GM12878 (cell line): ENCODE measurements at regions of chr12 and their contacts with region 1.

Region 1: DNA sequence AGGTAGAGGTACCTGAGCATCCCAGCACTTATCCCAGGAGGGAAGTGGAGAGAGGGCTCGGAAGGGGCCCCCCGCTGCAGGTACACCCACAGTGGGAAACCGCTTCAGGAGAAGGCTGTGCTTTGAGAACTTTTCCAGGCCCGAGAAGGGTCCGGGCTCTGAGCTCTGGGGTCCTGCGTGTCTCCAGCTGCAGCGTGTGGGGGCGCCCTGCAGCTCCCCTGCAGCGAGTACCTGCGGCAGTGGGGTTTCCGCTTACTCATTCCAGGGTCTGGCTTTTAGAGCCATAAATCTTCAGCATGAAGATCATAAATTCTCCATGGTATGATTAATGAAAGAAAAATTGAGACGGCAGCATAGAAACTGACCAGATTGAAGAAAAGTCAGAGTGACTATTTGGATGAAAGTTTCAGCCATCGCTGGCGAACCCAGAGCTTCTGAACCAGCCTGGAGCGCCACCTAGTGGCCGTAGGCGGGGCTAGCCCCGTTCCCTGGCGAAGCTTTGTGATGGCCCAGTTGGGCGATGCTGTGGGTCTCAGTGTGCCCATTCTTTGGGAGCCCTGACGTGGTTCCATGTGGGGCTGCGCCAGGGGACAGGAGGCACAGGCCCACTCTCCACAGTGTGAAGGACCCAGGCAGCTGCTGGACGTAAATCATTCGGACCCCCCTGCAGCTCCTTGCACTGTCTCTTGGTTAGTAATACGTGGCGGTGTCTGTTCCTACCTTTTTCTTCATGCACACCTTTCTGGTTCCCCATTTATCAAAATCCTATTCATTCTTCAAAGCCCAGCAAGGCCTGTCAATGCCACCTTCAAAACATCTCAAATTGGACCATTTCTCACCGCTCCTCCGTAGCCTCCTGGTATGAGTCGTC is 198.2 kb downstream of the TSPAN9 start:
- DNase-seq: no peak
- ATAC-seq: peak; percentile 96
- H3K4me3 ChIP-seq: no peak overlapping the region
- H3K27ac ChIP-seq: no peak overlapping the region
- H3K4me1 ChIP-seq: no peaks in the 10 kb centered on the region
- H3K27me3 ChIP-seq: no peaks in the 10 kb centered on the region; a peak in 2 of 4 replicates
- CTCF ChIP-seq: peak; percentile 83 to 96 (median 95)
- EP300 ChIP-seq: no peak
- POLR2A ChIP-seq: no peak
- RAD21 ChIP-seq: peak; percentile 85

Region 2: DNA sequence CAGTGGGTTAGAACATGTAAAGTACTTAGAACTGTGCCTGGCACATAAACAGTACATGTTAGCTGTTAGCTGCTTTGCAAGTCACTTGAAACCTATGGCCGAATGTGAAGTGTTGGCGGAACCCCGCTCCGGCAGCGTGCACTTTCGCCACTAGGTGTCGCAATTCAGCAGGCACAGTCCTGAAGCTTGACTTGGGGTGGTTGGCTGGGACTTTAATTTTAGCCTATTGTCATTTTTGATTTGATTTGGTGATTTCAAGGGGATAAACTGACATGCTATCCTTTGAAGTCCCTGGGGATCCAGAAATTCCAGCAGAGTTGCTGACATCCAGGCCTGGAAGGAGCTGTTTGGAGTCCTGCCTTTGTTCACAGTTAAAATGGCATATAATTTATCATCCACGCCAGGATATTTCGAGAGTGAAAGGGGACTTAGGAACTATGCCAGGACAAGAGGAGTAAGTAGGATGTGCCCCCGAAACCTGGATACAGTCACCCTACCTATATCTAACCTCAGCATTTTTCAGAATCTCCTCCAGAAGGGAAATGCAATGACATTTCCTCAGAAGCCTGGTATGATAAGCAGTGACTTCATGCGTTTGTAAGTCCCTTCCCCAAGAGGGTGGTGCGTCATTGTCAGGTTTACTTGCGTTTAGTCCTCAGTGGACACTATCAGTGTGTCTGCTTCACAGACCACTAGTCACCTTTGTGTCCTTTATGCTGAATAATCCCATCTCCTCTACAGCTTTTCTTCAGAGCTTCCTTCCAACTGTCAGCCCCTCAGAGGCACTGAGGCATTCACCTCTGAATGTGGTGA is 201.8 kb before region 1 on chr12:
- CTCF ChIA-PET with region 1: interaction called, 41 read pairs
- POLR2A ChIA-PET with region 1: no interaction called
- RAD21 ChIA-PET with region 1: interaction called, 9 read pairs
- SMC1A ChIA-PET with region 1: interaction called, 4 read pairs
- in situ Hi-C with region 1: loop called (anchors 5 kb)
- intact Hi-C with region 1: loop called (anchors 1 kb)
- DNase-seq: peak; percentile 37
- ATAC-seq: peak; percentile 87
- H3K4me3 ChIP-seq: no peak overlapping the region
- H3K27ac ChIP-seq: no peak overlapping the region
- H3K4me1 ChIP-seq: no peaks in the 10 kb centered on the region; the same call in 1 of the 2 replicates
- H3K27me3 ChIP-seq: peaks cover 0 to 6% of the 10 kb centered on the region in 2 experiments; a peak in 3 of 4 replicates
- CTCF ChIP-seq: peak; percentile 90 to 100 (median 97)
- EP300 ChIP-seq: no peak
- POLR2A ChIP-seq: no peak
- RAD21 ChIP-seq: peak; percentile 71

Region 3: GRCh38 chr12:3129301-3130056 is 145.9 kb before region 1 on chr12:
- CTCF ChIA-PET with region 1: interaction called, 27 read pairs
- POLR2A ChIA-PET with region 1: no interaction called
- RAD21 ChIA-PET with region 1: interaction called, 17 read pairs
- SMC1A ChIA-PET with region 1: interaction called, 3 read pairs
- in situ Hi-C with region 1: loop called (anchors 5 kb)
- intact Hi-C with region 1: no loop called
- DNase-seq: peak; percentile 25
- ATAC-seq: peak; percentile 27; the same call in 1 of the 3 replicates
- H3K4me3 ChIP-seq: no peak overlapping the region
- H3K27ac ChIP-seq: no peak overlapping the region
- H3K4me1 ChIP-seq: no peaks in the 10 kb centered on the region
- H3K27me3 ChIP-seq: peaks cover 2 to 5% of the 10 kb centered on the region in 2 experiments; a peak in 3 of 4 replicates
- CTCF ChIP-seq: no peak
- EP300 ChIP-seq: no peak; a peak in 1 of 4 replicates
- POLR2A ChIP-seq: no peak
- RAD21 ChIP-seq: no peak

Region 4: GRCh38 chr12:3135522-3136461 is 139.6 kb before region 1 on chr12:
- CTCF ChIA-PET with region 1: interaction called, 27 read pairs
- POLR2A ChIA-PET with region 1: no interaction called
- RAD21 ChIA-PET with region 1: interaction called, 17 read pairs
- SMC1A ChIA-PET with region 1: interaction called, 5 read pairs
- in situ Hi-C with region 1: loop called (anchors 5 kb)
- intact Hi-C with region 1: loop called (anchors 1 kb)
- DNase-seq: peak; percentile 20
- ATAC-seq: peak; percentile 94
- H3K4me3 ChIP-seq: no peak overlapping the region
- H3K27ac ChIP-seq: no peak overlapping the region
- H3K4me1 ChIP-seq: no peaks in the 10 kb centered on the region
- H3K27me3 ChIP-seq: peaks cover 2 to 8% of the 10 kb centered on the region in 2 experiments; a peak in 3 of 4 replicates
- CTCF ChIP-seq: peak; percentile 71 to 82 (median 72)
- EP300 ChIP-seq: no peak
- POLR2A ChIP-seq: no peak
- RAD21 ChIP-seq: peak; percentile 81

Region 5: GRCh38 chr12:3177778-3178425 is 97.5 kb before region 1 on chr12:
- CTCF ChIA-PET with region 1: no interaction called
- POLR2A ChIA-PET with region 1: no interaction called
- RAD21 ChIA-PET with region 1: no interaction called
- SMC1A ChIA-PET with region 1: no interaction called
- in situ Hi-C with region 1: no loop called
- intact Hi-C with region 1: no loop called
- DNase-seq: no peak
- ATAC-seq: peak; percentile 30; the same call in 2 of the 3 replicates
- H3K4me3 ChIP-seq: no peak overlapping the region
- H3K27ac ChIP-seq: no peak overlapping the region
- H3K4me1 ChIP-seq: no peaks in the 10 kb centered on the region
- H3K27me3 ChIP-seq: peaks cover 4 to 6% of the 10 kb centered on the region in 2 experiments; a peak in 2 of 4 replicates
- CTCF ChIP-seq: no peak
- EP300 ChIP-seq: no peak
- POLR2A ChIP-seq: no peak
- RAD21 ChIP-seq: no peak

Region 6: GRCh38 chr12:3554371-3555115 is 279.1 kb after region 1 on chr12:
- CTCF ChIA-PET with region 1: no interaction called
- POLR2A ChIA-PET with region 1: no interaction called
- RAD21 ChIA-PET with region 1: no interaction called
- SMC1A ChIA-PET with region 1: no interaction called
- in situ Hi-C with region 1: no loop called
- intact Hi-C with region 1: no loop called
- DNase-seq: no peak
- ATAC-seq: 0 out of 3 replicates have a peak, but pooled peaks have one; percentile 23
- H3K4me3 ChIP-seq: no peak overlapping the region
- H3K27ac ChIP-seq: no peak overlapping the region
- H3K4me1 ChIP-seq: no peaks in the 10 kb centered on the region
- H3K27me3 ChIP-seq: peaks cover 0 to 7% of the 10 kb centered on the region in 2 experiments; a peak in 3 of 4 replicates
- CTCF ChIP-seq: no peak
- EP300 ChIP-seq: no peak
- POLR2A ChIP-seq: no peak
- RAD21 ChIP-seq: no peak